Right cardiac atrium (tissue), 5 donors: ENCODE measurements at regions of chr11 and their contacts with region 1.

Region 1: DNA sequence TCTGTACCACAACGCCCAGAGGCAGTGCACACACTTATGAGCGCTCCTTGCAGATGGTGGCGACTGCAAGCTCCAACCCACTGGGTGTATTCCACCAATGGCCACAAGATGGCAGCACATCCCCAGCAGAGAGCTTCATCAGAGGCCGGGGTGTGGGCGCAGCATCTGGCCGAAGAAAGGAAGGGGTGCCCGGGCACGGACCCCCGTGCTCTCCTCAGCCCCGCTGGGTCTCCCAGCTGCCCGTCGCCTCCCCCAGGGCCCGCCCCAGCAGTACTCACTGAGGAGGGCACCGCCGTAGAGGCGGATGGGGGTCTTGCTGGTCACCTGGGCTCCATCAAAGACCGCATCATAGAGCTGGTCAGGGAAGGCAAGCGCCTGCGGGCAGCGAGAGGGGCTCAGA is 14.2 kb downstream of the TP53I11 start:
- DNase-seq: peak; percentile 78 to 94 (median 89)
- ATAC-seq: peak; percentile 43 to 53
- H3K4me3 ChIP-seq: no peak overlapping the region
- H3K27ac ChIP-seq: no peak overlapping the region
- H3K4me1 ChIP-seq: peaks cover 12% of the 10 kb centered on the region
- H3K27me3 ChIP-seq: no peaks in the 10 kb centered on the region

Region 2: GRCh38 chr11:44659641-44660040 is 276.9 kb before region 1 on chr11:
- intact Hi-C with region 1: no loop called
- DNase-seq: peak; percentile 66 to 87 (median 83)
- ATAC-seq: peak; percentile 92 to 93
- H3K4me3 ChIP-seq: no peak overlapping the region
- H3K27ac ChIP-seq: peak overlapping the region; percentile 29
- H3K4me1 ChIP-seq: peaks cover 13% of the 10 kb centered on the region
- H3K27me3 ChIP-seq: no peaks in the 10 kb centered on the region

Region 3: DNA sequence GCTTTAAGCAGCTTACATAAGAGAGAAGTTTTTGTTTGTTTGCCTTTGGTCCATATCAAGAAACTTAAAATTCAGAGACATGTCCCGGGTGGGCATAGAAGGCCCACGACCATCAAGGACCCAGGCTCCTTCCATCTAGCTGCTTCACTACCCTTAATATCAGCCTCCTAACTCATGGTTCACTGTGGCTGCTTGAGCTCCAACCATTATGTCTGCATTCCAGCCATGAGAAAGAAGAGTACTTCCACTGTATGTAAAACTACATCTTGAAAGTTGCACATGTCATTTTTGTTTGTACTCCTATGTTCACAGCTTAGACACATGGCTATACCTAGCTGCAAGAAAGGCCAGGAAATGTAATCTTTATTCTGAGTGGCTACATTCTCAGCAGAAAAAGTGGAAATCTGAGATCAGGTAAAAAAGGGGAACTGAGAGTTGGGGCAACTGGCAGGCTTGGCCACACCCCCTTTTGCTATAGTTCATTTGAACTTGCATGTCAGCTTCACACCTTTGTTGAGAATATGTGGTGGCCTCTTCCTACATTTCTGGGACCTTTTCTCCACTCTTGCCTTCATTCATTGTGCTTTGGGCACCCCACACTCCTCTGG is 95.5 kb after region 1 on chr11:
- intact Hi-C with region 1: no loop called
- DNase-seq: no peak
- ATAC-seq: no peak
- H3K4me3 ChIP-seq: no peak overlapping the region
- H3K27ac ChIP-seq: no peak overlapping the region
- H3K4me1 ChIP-seq: peaks cover 2% of the 10 kb centered on the region
- H3K27me3 ChIP-seq: no peaks in the 10 kb centered on the region

Region 4: DNA sequence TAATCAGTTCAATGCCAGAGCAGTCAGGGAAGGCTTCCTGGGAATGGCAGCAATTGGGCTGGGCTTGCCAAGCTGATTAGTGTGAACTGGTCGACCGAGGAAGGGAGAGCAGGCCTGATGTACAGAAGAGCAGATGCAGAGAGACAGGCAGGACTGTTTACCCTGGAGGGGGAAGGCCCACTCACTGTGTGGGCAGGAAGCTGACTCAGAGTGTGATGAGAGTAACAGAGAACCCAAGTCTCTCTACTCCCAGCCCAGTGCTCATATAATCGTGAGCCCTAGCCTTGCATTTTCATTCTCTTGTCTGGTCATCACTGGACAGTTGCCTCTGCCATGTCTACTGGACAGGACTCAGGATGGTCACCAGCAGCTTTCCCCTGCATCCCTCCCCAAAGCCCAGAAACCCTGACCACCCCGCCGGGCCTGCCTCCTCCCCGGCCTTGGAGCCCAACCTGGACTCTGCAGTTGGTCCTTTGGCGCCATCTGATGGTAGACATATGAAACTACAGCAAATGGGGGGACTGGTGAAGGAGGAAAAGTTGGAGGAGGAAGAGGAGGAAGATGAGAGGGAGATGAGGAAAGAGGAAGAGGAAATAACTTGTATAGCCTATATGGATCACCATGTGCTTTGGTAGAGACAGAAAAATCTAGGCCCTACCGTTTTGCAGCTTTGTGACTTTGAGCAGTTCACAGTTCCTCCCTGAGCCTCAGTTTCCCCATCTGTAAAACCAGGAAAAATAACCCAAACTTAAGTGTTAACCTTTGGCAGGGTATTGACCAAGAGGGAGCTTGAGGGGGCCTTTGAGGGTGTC is 166.5 kb after region 1 on chr11:
- intact Hi-C with region 1: loop called (anchors 1 to 5 kb)
- DNase-seq: peak; percentile 59 to 79 (median 76)
- ATAC-seq: peak; percentile 60 to 65
- H3K4me3 ChIP-seq: no peak overlapping the region
- H3K27ac ChIP-seq: no peak overlapping the region
- H3K4me1 ChIP-seq: no peaks in the 10 kb centered on the region
- H3K27me3 ChIP-seq: no peaks in the 10 kb centered on the region

Region 5: GRCh38 chr11:45217991-45218390 is 281.5 kb after region 1 on chr11:
- intact Hi-C with region 1: no loop called
- DNase-seq: no peak
- ATAC-seq: no peak
- H3K4me3 ChIP-seq: no peak overlapping the region
- H3K27ac ChIP-seq: no peak overlapping the region
- H3K4me1 ChIP-seq: no peaks in the 10 kb centered on the region
- H3K27me3 ChIP-seq: no peaks in the 10 kb centered on the region

Region 6: DNA sequence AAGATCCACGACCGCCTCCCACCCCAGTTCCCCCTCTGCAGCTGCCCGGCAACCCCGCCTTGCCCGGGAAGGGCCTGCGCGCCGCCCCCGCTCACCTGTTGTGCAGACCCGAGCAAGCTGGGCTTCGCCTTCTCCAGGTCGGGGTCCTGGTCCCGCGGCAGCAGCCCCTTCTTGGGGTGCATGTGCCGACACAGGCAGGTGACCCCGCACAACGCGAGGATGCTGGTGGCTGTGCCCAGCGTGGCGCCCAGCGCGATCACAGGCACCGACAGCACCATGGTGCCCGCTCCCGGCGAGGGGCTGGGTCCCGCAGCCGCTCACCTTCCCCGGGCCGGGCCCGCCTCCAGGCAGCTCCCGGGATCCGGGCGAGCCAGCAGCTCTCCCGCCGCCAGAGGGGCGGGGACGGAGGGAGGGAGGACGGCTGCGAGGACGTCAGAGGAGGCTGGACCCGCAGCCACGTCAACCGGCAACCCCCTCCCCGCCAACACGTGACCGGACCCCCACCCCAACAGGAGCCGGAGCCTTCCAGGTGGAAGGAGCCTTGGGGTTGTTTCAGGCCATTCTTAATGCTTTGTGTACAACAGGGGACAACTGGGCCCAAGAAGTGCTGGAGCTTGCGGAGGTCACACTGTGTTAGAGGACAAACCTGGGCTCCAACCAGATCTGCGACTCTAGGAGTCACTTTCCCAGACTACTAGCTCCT is 349.6 kb after region 1 on chr11 and contains the start of gene SYT13:
- intact Hi-C with region 1: loop called in 2 of 4 experiments (anchors 10 kb)
- DNase-seq: peak; percentile 32 to 79 (median 72)
- ATAC-seq: peak; percentile 88 to 90
- H3K4me3 ChIP-seq: peak within 1 kb of the TSS; percentile 6
- H3K27ac ChIP-seq: no peak within 1 kb of the TSS
- H3K4me1 ChIP-seq: no peaks in the 10 kb centered on the region
- H3K27me3 ChIP-seq: peaks cover 2% of the 10 kb centered on the region
- total RNA-seq, gene SYT13: 15.3 to 28.5 (median 23.6) TPM

Region 7: DNA sequence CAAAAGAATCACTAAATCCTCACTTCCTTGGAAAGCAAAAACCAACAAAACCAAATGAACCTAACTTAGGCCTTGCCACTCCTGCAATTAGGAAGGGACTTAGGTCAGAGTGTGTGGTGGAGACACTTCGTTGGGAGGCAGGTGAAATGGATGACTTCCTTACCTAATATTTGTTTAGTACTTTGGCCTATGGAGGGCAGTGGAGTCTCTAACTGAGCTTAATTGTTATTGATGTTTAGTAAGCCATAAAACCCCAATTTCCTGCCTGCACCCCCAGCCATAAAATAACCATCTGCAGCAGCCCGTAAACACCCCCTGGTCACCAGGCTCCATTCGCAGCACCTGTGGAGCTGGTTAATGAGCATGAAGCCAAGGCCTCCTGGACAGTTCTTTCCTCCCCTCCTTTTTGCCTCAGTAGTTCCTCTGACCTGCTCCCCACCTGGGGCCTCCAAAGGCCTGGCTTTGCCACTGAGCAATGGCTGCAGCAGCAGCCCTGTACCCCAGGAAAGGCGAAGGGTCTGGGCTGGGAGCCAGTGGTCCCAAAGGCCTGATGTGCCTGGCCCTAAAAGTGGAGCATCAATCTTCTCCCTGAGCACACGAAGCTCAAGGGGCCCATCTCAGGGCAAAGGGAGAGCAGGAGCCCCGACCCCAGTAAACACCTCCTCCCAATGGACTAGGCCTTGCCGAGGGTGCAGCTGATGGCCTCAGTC is 365.2 kb after region 1 on chr11:
- intact Hi-C with region 1: loop called in 2 of 4 experiments (anchors 10 kb)
- DNase-seq: no peak
- ATAC-seq: no peak
- H3K4me3 ChIP-seq: no peak overlapping the region
- H3K27ac ChIP-seq: no peak overlapping the region
- H3K4me1 ChIP-seq: no peaks in the 10 kb centered on the region
- H3K27me3 ChIP-seq: no peaks in the 10 kb centered on the region

Region 8: DNA sequence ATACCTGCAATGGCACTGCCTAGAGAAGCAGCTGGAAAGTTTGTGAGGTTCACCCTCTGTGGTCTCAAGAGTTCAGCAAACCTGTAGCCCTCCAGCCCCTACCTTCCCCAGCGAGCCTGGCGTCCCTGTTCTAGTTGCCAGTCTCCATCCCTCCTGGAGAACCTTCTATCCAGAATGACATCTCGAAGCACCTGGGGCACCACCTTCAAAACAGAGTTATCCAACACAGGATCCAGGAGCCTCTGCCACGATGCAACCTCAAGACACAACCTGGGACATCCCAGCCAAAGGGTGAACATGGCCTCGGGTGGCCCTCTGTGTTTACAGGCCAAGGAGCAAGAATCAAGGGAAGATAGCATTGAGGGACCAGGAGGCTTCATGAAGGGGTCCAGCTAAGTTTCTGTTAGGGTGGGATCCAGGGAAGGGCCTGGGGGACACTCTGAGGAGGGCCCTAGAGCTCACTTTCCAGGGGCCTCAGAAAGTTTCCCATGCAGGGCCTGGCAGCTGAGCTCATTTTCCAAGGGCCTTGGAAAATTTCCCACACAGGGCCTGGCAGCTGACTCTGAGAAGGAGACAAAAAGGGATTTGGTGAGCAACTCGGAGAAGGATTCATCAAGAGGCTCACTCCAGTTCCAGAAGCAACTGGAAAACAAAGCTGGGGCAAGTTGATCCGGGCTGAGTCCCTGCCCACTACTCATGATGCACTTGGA is 386.5 kb after region 1 on chr11:
- intact Hi-C with region 1: loop called in 1 of 4 experiments (anchors 10 kb)
- DNase-seq: peak; percentile 30 to 69 (median 64)
- ATAC-seq: peak in 1 of 2 donors; percentile 22
- H3K4me3 ChIP-seq: no peak overlapping the region
- H3K27ac ChIP-seq: peak overlapping the region; percentile 70
- H3K4me1 ChIP-seq: peaks cover 7% of the 10 kb centered on the region
- H3K27me3 ChIP-seq: no peaks in the 10 kb centered on the region